ENCODE measurements at regions of chr19 and their contacts with region 1.

Region 1: DNA sequence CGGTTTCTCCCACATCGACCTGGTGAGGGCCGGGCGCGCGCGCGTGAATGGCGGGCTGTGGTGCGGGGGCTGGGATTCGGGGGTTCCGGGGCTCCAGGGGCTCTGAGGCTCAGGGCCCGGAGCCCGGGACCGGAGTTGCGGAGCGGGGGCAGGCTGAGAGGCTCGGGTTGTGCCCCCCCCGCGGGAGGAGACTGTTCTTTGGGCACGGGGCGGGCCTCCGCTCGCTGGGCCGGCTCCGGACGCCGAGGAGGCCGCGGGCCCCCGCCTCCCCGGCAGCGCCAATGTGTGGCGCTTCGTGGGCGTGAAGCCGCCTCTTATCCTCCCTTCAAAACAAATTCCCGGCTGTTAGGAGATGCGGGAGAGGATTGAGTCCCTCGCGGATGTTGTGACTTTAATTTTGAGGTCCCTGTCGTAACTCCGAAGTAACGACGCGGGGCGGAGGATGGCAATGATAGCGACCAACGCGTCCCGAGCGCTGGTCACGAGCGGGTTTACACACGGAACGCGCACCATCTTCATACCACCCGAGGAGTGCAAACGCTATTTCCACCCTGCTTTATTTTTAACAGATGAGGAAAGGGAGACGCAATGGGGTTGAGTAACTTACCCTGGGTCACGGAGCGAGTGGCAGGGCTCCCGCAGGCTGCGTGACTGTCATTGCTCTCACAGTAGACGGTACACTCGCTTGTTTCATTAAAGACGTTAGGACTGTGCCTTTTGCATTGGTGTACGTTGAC is 536 bp downstream of the UBA2 start:
- DNase-seq: peak; percentile 25 to 51
- ATAC-seq: peak; percentile 51 to 80 (median 62)
- H3K4me3 ChIP-seq: peak overlapping the region; percentile 76 to 98 (median 90)
- H3K27ac ChIP-seq: peak overlapping the region; percentile 79 to 96 (median 92)
- H3K4me1 ChIP-seq: peaks cover 11 to 56% (median 49%) of the 10 kb centered on the region in 9 donors
- H3K27me3 ChIP-seq: no peaks in the 10 kb centered on the region
- CTCF ChIP-seq: no peak

Region 2: DNA sequence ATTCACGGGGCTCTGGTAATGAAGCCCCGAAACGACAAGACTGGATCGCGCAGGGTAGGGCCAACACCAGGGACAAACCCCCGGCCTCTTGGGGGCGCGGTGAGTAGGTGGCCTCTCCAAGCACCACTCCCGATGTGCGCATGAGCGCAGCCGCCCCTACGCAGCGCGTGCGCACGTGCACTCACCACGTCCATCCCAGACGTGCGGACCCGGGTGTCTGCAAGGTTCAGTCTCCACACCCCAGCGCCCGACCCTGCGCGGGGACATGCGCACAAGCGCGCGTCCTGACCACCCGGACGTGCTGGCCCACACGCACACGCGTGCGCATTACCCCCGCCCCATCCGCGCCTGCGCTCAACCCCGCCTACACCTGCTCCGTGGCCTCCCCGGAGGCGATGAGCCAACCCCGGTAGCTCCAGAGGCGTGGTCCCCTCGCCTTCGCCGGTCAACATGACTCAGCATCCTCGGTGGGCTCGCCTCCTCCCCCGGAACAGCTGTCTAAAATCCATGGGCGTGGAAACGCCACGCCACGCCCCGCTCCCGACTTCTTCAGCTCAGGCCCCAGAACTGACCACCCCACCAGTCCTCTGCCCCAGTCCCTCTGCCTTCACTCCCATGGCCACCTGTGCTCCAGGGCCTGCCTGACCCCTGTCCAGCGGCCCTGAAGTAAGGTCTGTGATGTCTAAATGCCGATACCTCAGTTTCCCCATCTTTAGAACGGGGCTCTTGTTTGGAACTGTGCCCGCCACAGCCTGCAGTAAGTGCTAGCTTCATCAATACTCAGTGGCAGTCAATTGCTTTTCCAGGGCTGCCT is 69.4 kb before region 1 on chr19:
- intact Hi-C with region 1: loop called in 1 of 10 experiments (anchors 2 kb)
- DNase-seq: peak; percentile 92 to 97
- ATAC-seq: peak; percentile 96 to 98 (median 96)
- H3K4me3 ChIP-seq: peak overlapping the region in 9 of 10 donors; percentile 32 to 64 (median 54)
- H3K27ac ChIP-seq: peak overlapping the region; percentile 67 to 87 (median 80)
- H3K4me1 ChIP-seq: peaks cover 4 to 22% (median 13%) of the 10 kb centered on the region in 9 donors
- H3K27me3 ChIP-seq: no peaks in the 10 kb centered on the region
- CTCF ChIP-seq: peak; percentile 11 to 74 (median 51)

Region 3: DNA sequence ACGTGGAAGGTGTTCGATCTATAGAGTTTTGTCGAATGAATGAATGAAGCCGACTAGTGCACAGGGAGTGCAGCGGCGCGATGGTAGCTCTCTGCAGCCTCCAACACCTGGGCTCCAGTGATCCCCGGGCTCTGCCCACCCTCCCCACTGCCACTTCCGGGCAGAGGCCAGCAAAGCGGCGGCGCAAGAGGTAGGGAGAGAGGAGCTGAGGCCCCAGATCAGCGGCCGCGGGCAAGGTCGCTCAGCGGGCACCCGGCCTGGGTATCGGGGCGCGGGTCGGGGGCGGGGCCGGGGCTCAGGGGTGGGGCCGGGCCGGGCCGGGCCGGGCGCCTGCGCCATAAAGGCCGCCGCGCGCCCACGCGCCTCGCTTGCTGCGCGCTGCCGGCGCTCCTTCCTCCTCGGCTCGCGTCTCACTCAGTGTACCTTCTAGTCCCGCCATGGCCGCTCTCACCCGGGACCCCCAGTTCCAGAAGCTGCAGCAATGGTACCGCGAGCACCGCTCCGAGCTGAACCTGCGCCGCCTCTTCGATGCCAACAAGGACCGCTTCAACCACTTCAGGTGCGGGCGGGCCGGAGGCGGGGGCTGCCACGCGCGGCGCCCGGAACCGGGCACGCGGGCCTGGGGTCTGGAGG is 63.8 kb before region 1 on chr19 and contains the start of gene GPI:
- intact Hi-C with region 1: loop called in 1 of 10 experiments (anchors 5 kb)
- DNase-seq: peak; percentile 51 to 69
- ATAC-seq: peak; percentile 75 to 92 (median 80)
- H3K4me3 ChIP-seq: peak within 1 kb of the TSS; percentile 82 to 99 (median 92)
- H3K27ac ChIP-seq: peak within 1 kb of the TSS; percentile 65 to 97 (median 94)
- H3K4me1 ChIP-seq: peaks cover 17 to 51% (median 37%) of the 10 kb centered on the region in 9 donors
- H3K27me3 ChIP-seq: no peaks in the 10 kb centered on the region
- CTCF ChIP-seq: no peak
- total RNA-seq, gene GPI: 517 to 711 (median 563) TPM

Region 4: DNA sequence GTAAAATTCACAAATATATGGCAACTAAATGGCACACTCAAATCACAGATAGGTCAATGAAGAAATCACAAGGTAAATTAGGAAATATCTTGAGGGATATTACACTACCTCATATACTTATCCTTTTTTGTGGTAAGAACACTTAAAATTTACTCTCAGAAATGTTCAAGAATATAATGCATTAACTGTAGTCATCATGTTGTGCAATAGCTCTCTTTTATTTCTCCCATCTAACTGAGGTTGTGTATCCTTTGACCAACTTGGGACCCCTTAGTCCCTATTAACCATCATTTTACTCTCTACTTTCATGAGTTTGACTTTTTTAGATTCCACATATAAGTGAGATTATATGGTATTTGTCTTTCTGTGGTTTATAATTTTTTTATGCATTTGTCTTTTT is 105.5 kb after region 1 on chr19:
- intact Hi-C with region 1: no loop called
- DNase-seq: no peak
- ATAC-seq: no peak
- H3K4me3 ChIP-seq: no peak overlapping the region
- H3K27ac ChIP-seq: no peak overlapping the region
- H3K4me1 ChIP-seq: no peaks in the 10 kb centered on the region
- H3K27me3 ChIP-seq: peaks cover 0 to 19% (median 4%) of the 10 kb centered on the region in 7 donors
- CTCF ChIP-seq: no peak

Region 5: DNA sequence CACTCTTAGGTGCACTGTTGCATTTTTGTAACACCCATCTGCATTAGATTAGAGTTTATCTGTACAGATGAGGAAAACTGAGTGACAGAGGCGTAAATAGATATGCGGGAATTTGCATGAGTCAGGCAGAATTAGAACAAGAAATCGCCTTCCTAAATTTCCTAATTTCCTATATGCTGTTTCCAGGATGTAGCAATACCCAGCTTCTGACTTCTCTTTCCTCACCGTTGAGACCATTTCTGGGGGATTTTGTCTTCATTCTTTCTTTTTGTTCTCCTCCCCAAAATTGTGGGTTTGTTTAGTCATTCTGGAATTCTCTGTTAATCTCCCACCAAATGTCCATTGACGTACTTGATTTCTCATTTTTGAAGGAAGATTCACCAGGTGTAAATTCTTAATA is 545.9 kb after region 1 on chr19:
- intact Hi-C with region 1: no loop called
- DNase-seq: no peak
- ATAC-seq: no peak
- H3K4me3 ChIP-seq: no peak overlapping the region
- H3K27ac ChIP-seq: peak overlapping the region in 1 of 10 donors; percentile 71
- H3K4me1 ChIP-seq: peaks cover 0 to 32% (median 0%) of the 10 kb centered on the region in 9 donors
- H3K27me3 ChIP-seq: no peaks in the 10 kb centered on the region
- CTCF ChIP-seq: no peak